Calu3 (cell line): ENCODE measurements at regions of chr9 and their contacts with region 1.

Region 1: DNA sequence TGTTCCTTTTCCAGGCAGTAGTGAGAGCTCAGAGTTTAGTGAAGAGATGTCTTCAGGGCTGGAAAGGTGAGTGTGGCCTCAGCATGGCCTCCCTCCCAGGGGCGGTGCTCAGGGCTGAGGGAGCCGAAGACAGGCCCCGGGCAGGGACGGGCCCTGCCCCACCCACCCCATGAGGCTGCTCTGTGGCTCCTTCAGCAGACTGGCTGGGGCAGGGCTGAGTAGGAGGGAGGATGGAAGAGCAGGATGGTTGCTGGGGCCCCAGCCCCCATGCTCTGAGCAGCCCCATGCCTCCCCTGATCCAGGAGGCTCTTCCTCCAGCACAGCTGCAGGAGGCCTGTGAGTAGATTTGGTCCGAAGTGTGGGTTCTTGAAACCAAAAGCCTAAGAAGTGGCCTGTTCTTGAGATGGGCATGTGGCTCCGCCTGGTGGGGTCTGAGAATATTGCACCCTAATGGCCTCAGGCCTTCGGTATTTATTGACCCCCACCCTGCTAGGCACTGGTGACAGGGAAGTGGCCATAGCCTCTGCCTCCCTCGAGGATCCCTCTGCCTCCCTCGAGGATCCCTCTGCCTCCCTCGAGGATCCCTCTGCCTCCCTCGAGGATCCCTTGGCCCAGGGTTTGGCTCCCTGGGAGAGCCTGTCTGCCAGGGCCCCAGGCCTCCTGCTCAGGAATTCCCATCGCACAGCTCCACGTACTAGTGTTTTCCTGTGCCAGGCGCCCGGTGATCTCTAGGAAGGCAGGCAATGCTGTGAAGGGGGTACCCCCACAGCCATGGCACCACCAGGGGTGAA is 65.4 kb upstream of the GARNL3 start:
- DNase-seq: peak; percentile 72
- H3K4me3 Mint-ChIP-seq: no peak overlapping the region
- H3K27ac Mint-ChIP-seq: no peak overlapping the region
- H3K4me1 Mint-ChIP-seq: no peaks in the 10 kb centered on the region
- H3K27me3 Mint-ChIP-seq: no peaks in the 10 kb centered on the region
- CTCF ChIP-seq: peak; percentile 76

Region 2: GRCh38 chr9:126939821-126940221 is 259.4 kb before region 1 on chr9:
- CTCF ChIA-PET with region 1: interaction called, 16 read pairs
- intact Hi-C with region 1: loop called (anchors 1 kb)
- DNase-seq: peak; percentile 26
- H3K4me3 Mint-ChIP-seq: peak overlapping the region; percentile 27
- H3K27ac Mint-ChIP-seq: peak overlapping the region; percentile 38
- H3K4me1 Mint-ChIP-seq: peaks cover 11% of the 10 kb centered on the region
- H3K27me3 Mint-ChIP-seq: no peaks in the 10 kb centered on the region
- CTCF ChIP-seq: no peak

Region 3: GRCh38 chr9:126965541-126966428 is 233.4 kb before region 1 on chr9:
- CTCF ChIA-PET with region 1: interaction called, 5 read pairs
- intact Hi-C with region 1: loop called (anchors 1 kb)
- DNase-seq: peak; percentile 47
- H3K4me3 Mint-ChIP-seq: no peak overlapping the region
- H3K27ac Mint-ChIP-seq: no peak overlapping the region
- H3K4me1 Mint-ChIP-seq: no peaks in the 10 kb centered on the region
- H3K27me3 Mint-ChIP-seq: no peaks in the 10 kb centered on the region
- CTCF ChIP-seq: peak; percentile 16

Region 4: GRCh38 chr9:127130661-127131538 is 68.3 kb before region 1 on chr9:
- CTCF ChIA-PET with region 1: no interaction called
- intact Hi-C with region 1: no loop called
- DNase-seq: no peak
- H3K4me3 Mint-ChIP-seq: no peak overlapping the region
- H3K27ac Mint-ChIP-seq: no peak overlapping the region
- H3K4me1 Mint-ChIP-seq: no peaks in the 10 kb centered on the region
- H3K27me3 Mint-ChIP-seq: peaks cover 16% of the 10 kb centered on the region
- CTCF ChIP-seq: no peak